Left cardiac atrium (tissue), 4 donors: ENCODE measurements at regions of chr12 and their contacts with region 1.

Region 1: GRCh38 chr12:104671407-104672098 is 214.8 kb downstream of the CHST11 start:
- DNase-seq: peak; percentile 89
- ATAC-seq: peak; percentile 59 to 64

Region 2: DNA sequence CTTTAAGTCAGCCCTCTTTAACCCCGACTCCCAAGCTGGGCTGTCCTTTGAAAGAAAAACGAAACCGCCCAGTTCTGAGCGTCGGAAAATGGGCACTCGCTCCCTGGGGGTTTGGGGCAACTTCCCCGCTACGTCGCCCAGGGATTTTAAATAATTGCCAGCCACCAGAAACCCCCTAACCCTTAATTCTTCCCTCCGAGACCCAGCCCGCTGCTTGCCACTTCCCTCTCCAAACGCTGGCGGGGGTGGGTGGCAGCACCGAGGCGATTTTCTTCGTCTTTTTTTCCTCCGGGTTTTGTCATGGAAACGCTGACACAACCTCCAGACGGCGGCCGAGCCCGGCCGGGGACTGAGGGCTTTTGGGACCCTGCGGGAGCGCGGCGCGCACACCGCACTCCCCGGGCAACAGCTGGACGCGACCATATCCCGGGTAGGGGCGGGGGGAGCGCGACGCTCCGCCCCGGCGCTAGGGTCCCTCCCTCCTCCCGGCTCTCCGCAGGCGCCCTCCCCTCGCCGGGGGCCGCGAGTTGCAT is 215.1 kb before region 1 on chr12 and contains the start of gene CHST11:
- intact Hi-C with region 1: loop called in 1 of 2 experiments (anchors 5 kb)
- DNase-seq: peak; percentile 88
- ATAC-seq: peak; percentile 92 to 94
- total RNA-seq, gene CHST11: 12.9 to 17.7 TPM

Region 3: GRCh38 chr12:104784592-104784991 is 113.0 kb after region 1 on chr12:
- intact Hi-C with region 1: no loop called
- DNase-seq: no peak
- ATAC-seq: peak in 1 of 2 donors; percentile 61

Region 4: DNA sequence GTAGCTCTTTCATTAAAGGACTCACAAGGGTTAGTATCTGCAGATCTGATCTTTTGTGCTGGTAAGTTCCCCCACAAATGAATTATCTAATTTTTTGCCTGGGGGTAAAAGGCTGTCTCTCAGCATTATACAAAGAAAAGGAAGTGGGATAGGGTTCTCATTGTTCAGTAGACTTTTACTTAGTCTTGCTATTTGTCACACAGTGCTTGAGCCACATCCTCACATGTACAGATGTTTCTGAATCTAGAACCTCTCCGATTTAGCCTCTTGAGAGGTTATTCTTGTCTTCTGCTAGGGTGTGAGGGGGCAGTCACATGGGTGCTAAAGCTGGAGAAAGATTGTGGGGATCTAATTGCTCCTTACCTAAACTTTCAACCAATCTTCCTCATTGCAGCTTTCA is 193.5 kb after region 1 on chr12:
- intact Hi-C with region 1: loop called in 1 of 2 experiments (anchors 10 kb)
- DNase-seq: no peak
- ATAC-seq: no peak